H1 (cell line): ENCODE measurements at regions of chr10 and their contacts with region 1.

Region 1: DNA sequence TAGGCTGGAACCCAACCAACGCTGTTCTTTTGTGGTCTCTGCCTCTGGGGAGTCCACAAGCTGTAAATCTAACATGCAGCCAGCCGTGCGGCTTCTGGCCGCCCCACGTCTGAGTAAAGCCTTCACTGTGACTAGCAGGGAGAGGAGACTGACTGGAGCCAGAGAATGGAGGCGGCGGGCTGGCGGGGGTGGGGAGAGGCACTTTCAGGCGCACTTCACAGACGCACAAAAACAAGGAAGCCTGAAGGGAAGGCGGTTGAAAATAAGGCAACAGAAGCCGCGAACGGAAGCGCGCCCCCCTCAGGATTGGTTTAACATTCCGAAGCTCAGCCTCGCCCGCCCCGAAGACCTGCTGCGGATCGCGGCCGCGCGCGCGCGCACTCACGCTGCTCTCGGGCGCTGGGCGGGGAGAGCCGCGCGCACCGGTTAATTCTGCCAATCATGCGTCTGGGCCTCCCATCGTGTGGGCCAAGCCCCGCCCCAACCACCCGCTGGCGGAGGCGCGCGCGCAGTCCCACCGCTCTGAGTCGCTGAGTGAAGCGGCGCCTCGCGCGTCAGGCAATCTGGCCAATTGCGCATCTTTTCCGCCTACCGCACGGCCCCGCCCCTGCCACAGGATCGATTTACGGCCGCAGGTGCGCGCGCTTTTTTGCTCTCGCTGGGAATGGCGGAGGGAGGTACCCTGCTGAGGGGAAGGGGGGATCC is at the start of gene SFR1:
- DNase-seq: peak; percentile 97 to 99
- H3K4me3 ChIP-seq: peak within 1 kb of the TSS; percentile 68 to 96 (median 88)
- H3K27ac ChIP-seq: peak within 1 kb of the TSS; percentile 99
- H3K4me1 ChIP-seq: peaks cover 0 to 8% (median 4%) of the 10 kb centered on the region in 4 experiments; a peak in 3 of 7 replicates
- H3K27me3 ChIP-seq: no peaks in the 10 kb centered on the region
- CTCF ChIP-seq: peak; percentile 54 to 67 (median 62)
- EP300 ChIP-seq: no peak; a peak in 1 of 3 replicates
- POLR2A ChIP-seq: peak; percentile 85 to 90
- RAD21 ChIP-seq: peak; percentile 43 to 59
- total RNA-seq, gene SFR1: 6.9 and 7.7 TPM in 2 replicates

Region 2: DNA sequence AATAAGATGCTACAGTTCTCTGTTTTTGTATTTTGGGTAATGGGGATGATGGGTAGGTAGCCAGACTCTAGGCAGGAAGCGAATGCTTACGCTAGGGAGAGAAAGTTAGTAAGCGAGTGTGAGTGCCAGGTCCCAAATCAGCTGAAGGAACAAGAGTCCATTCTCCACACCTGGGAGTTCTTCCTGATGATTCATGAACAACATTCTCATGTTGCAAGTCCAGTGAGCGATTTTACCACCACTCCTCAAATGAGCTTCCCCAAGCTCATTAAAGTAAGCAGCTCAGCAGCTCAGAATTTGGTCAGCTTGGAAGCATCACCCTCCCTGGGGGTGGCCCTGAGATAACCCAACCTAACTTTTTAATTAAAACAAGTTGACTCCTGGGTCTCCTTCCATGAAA is 293.6 kb before region 1 on chr10:
- CTCF ChIA-PET with region 1: no interaction called
- POLR2A ChIA-PET with region 1: no interaction called
- DNase-seq: no peak
- H3K4me3 ChIP-seq: no peak overlapping the region
- H3K27ac ChIP-seq: no peak overlapping the region
- H3K4me1 ChIP-seq: peaks cover 0 to 7% (median 0%) of the 10 kb centered on the region in 4 experiments; a peak in 1 of 7 replicates
- H3K27me3 ChIP-seq: no peaks in the 10 kb centered on the region
- CTCF ChIP-seq: no peak
- EP300 ChIP-seq: no peak
- POLR2A ChIP-seq: no peak
- RAD21 ChIP-seq: no peak

Region 3: GRCh38 chr10:104045151-104046089 is 76.3 kb before region 1 on chr10:
- CTCF ChIA-PET with region 1: interaction called, 43 read pairs
- POLR2A ChIA-PET with region 1: interaction called, 13 read pairs
- DNase-seq: peak; percentile 39 to 72
- H3K4me3 ChIP-seq: no peak overlapping the region
- H3K27ac ChIP-seq: no peak overlapping the region
- H3K4me1 ChIP-seq: peaks cover 0 to 4% (median 2%) of the 10 kb centered on the region in 4 experiments; a peak in 3 of 7 replicates
- H3K27me3 ChIP-seq: no peaks in the 10 kb centered on the region
- CTCF ChIP-seq: peak; percentile 66 to 90 (median 84)
- EP300 ChIP-seq: no peak
- POLR2A ChIP-seq: no peak
- RAD21 ChIP-seq: peak; percentile 93 to 97

Region 4: GRCh38 chr10:104067525-104067924 is 54.1 kb before region 1 on chr10:
- CTCF ChIA-PET with region 1: interaction called, 3 read pairs
- POLR2A ChIA-PET with region 1: interaction called, 43 read pairs
- DNase-seq: no peak
- H3K4me3 ChIP-seq: peak overlapping the region in 2 of 4 experiments; percentile 3 to 32; a peak in 3 of 8 replicates
- H3K27ac ChIP-seq: 0 out of 2 replicates have a peak overlapping the region, but pooled peaks have one; percentile 30
- H3K4me1 ChIP-seq: peaks cover 2 to 16% (median 8%) of the 10 kb centered on the region in 4 experiments; a peak in 6 of 7 replicates
- H3K27me3 ChIP-seq: peaks cover 0 to 2% (median 0%) of the 10 kb centered on the region in 4 experiments; a peak in 1 of 7 replicates
- CTCF ChIP-seq: no peak
- EP300 ChIP-seq: no peak
- POLR2A ChIP-seq: no peak
- RAD21 ChIP-seq: no peak

Region 5: DNA sequence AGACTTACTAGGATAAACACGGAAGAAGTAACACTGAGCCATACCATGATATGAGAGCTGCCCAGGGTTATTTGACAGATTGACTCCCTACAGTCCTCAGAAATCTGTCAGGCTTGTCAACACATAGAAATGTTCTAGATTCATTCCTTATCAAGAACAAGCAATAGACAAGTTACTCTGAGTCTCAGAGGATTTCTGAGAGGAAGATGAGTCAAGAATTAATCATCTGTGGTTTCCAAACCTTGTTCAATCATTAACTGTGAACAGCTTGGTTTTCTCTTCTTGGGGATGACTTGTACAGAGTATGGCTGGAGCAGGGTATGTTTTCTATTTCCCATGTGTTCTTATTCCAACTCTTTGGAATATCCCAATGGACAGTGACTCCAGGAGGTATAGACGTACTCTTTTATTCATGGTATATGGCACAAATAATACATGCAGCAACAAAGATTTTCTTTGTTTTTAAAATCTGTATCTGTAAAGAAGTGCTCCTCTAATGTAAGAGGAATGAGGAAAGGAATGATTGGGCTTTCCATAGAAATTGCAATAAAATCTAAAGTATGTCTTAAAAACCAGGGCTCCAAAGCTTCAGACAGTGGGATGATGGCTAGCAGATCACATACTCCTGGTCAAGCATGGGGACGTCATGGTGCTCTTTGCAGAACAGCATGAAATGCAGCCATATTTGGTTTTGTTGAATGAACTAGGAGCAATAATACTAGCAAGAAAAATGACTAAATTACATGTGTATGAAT is 11.6 kb before region 1 on chr10:
- CTCF ChIA-PET with region 1: interaction called, 3 read pairs
- POLR2A ChIA-PET with region 1: interaction called, 19 read pairs
- DNase-seq: no peak
- H3K4me3 ChIP-seq: no peak overlapping the region
- H3K27ac ChIP-seq: no peak overlapping the region
- H3K4me1 ChIP-seq: peaks cover 0 to 2% (median 0%) of the 10 kb centered on the region in 4 experiments; a peak in 1 of 7 replicates
- H3K27me3 ChIP-seq: no peaks in the 10 kb centered on the region
- CTCF ChIP-seq: no peak
- EP300 ChIP-seq: no peak
- POLR2A ChIP-seq: no peak
- RAD21 ChIP-seq: no peak